Activated CD8-positive, alpha-beta T cell treated with anti-CD3 and anti-CD28 coated beads for 36 hours (primary cell): ENCODE measurements at regions of chr5 and their contacts with region 1.

Region 1: DNA sequence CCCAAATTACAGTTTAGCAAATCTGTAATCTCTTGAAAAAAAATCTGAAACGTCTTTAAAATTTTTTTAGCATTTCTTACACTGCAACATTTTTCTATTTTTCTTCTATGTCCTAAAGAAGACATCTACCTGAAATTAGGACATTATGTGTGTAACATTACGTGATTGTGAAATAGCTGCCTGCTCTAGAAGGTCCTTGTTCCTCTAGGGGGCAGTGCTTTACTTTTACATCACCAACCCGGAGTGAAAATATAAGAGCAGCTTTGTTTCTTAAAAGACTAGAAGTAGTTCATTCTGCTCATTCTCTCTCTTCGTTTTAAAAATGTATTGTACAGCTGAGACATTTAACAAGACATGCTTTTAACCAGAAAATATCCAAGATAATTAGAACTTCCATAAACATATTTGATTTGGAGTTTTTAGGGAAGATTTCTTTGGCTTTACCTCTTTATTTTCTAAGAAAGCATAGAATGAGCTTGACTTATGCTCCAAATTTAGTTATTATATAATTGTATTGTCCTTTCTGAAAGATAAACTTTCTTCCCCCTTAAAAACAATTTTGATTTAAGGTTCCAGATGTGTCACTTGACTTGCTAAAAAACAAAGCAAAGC is 48.1 kb upstream of the RIOK2 start:
- DNase-seq: peak; percentile 47
- ATAC-seq: peak; percentile 61
- H3K4me3 Mint-ChIP-seq: no peak overlapping the region
- H3K27ac Mint-ChIP-seq: no peak overlapping the region
- H3K4me1 Mint-ChIP-seq: no peaks in the 10 kb centered on the region
- H3K27me3 Mint-ChIP-seq: no peaks in the 10 kb centered on the region
- CTCF ChIP-seq: peak; percentile 71

Region 2: GRCh38 chr5:97208714-97209113 is 22.4 kb before region 1 on chr5:
- CTCF ChIA-PET with region 1: interaction called, 10 read pairs
- POLR2A ChIA-PET with region 1: no interaction called
- intact Hi-C with region 1: no loop called
- DNase-seq: no peak
- ATAC-seq: no peak
- H3K4me3 Mint-ChIP-seq: no peak overlapping the region
- H3K27ac Mint-ChIP-seq: no peak overlapping the region
- H3K4me1 Mint-ChIP-seq: no peaks in the 10 kb centered on the region
- H3K27me3 Mint-ChIP-seq: peaks cover 11% of the 10 kb centered on the region
- CTCF ChIP-seq: no peak

Region 3: DNA sequence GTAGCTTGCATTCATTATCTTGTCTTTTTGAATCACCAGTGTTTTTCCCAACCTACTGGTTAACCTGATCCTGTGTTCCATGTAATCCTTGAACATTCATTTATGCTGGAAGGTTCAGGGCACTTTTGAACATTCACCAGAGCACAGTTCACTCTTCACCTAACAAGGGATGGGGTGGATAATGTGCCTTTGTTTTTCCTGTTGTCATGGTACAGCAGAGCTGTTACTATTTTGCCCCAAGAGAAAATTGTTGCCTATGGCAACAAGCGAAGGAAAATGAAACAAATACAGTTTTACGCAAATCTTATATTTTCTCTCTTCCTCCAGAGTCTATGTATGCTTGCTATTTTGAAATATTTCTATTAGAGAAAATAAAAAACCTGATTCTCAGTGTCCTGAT is 12.2 kb after region 1 on chr5:
- CTCF ChIA-PET with region 1: interaction called, 12 read pairs
- POLR2A ChIA-PET with region 1: no interaction called
- intact Hi-C with region 1: no loop called
- DNase-seq: no peak
- ATAC-seq: no peak
- H3K4me3 Mint-ChIP-seq: no peak overlapping the region
- H3K27ac Mint-ChIP-seq: no peak overlapping the region
- H3K4me1 Mint-ChIP-seq: no peaks in the 10 kb centered on the region
- H3K27me3 Mint-ChIP-seq: no peaks in the 10 kb centered on the region
- CTCF ChIP-seq: no peak

Region 4: GRCh38 chr5:97281257-97281656 is 50.1 kb after region 1 on chr5:
- CTCF ChIA-PET with region 1: no interaction called
- POLR2A ChIA-PET with region 1: no interaction called
- intact Hi-C with region 1: no loop called
- DNase-seq: no peak
- ATAC-seq: no peak
- H3K4me3 Mint-ChIP-seq: no peak overlapping the region
- H3K27ac Mint-ChIP-seq: no peak overlapping the region
- H3K4me1 Mint-ChIP-seq: no peaks in the 10 kb centered on the region
- H3K27me3 Mint-ChIP-seq: no peaks in the 10 kb centered on the region
- CTCF ChIP-seq: no peak

Region 5: DNA sequence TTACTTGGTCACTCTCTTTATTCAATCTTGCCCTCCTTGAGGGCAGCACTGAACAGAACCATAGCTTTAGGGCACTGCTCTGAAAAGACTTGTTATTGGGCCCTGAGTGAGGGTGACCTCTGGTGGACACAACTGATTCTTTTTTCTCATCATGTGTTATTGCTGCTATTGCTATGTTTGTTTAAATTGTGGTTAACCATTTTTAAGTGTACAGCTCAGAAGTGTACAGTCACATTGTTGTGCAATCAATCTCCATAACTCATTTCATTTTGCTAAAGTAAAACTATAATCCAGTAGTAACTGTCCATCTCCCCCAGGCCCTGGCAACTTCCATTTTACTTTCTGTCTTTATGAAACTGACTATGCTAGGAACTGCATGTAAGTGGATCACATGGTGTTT is 303.0 kb after region 1 on chr5:
- CTCF ChIA-PET with region 1: interaction called, 17 read pairs
- POLR2A ChIA-PET with region 1: no interaction called
- intact Hi-C with region 1: no loop called
- DNase-seq: peak; percentile 28
- ATAC-seq: no peak
- H3K4me3 Mint-ChIP-seq: no peak overlapping the region
- H3K27ac Mint-ChIP-seq: no peak overlapping the region
- H3K4me1 Mint-ChIP-seq: no peaks in the 10 kb centered on the region
- H3K27me3 Mint-ChIP-seq: no peaks in the 10 kb centered on the region
- CTCF ChIP-seq: peak; percentile 55

Region 6: DNA sequence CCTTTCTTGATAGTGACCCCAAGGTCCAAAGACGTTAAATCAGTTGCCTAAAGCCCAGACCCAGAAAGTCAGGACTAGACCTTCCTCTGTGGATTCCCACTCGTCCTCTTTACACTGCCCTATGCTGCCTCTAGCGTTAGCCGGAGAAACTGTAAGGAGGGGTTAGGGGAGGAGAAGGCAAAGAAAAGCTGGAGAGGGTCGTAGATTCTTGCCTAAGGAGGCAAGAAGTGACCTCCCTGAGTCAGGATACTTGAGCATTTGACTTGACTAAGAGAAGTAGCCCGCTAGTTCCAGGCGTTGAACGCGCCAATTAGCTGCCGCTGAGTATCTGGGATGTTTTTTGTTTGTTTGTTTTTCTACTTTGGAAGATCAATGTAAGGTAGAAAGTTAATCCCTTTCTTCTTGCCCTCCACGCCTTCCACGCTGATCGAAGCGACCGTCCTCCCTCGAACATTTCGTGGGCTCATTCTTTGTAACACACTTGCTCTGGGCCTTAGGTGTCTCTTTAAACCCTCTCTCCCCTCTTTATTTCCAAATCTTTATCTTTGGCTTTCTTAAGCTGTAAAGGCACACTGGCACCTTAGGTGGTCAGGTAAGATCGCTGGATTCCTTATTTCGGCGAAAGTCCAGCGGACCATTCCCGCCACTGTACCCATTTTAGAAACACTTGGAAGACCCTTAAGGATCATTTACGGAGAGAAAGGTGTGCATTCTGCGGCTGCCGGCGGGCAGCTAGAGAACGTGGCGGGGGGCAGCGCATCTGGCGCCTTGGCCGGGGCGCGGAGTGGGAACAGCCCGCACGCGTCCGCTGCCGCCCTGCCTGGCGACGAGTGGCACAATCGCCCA is 1537.3 kb after region 1 on chr5:
- CTCF ChIA-PET with region 1: interaction called, 12 read pairs
- POLR2A ChIA-PET with region 1: no interaction called
- intact Hi-C with region 1: no loop called
- DNase-seq: peak; percentile 35
- ATAC-seq: peak; percentile 52
- H3K4me3 Mint-ChIP-seq: peak overlapping the region; percentile 78
- H3K27ac Mint-ChIP-seq: no peak overlapping the region
- H3K4me1 Mint-ChIP-seq: peaks cover 25% of the 10 kb centered on the region
- H3K27me3 Mint-ChIP-seq: peaks cover 38% of the 10 kb centered on the region
- CTCF ChIP-seq: peak; percentile 68

Region 7: GRCh38 chr5:98796197-98796972 is 1565.3 kb after region 1 on chr5:
- CTCF ChIA-PET with region 1: interaction called, 16 read pairs
- POLR2A ChIA-PET with region 1: no interaction called
- intact Hi-C with region 1: no loop called
- DNase-seq: peak; percentile 69
- ATAC-seq: peak; percentile 94
- H3K4me3 Mint-ChIP-seq: no peak overlapping the region
- H3K27ac Mint-ChIP-seq: no peak overlapping the region
- H3K4me1 Mint-ChIP-seq: no peaks in the 10 kb centered on the region
- H3K27me3 Mint-ChIP-seq: no peaks in the 10 kb centered on the region
- CTCF ChIP-seq: peak; percentile 77